ENCODE measurements at regions of chr17 and their contacts with region 1.

Region 1: GRCh38 chr17:28726226-28727130 is at the start of gene TLCD1:
- DNase-seq: peak; percentile 95
- H3K4me3 ChIP-seq: peak within 1 kb of the TSS; percentile 29 to 57 (median 41)
- H3K27ac ChIP-seq: peak within 1 kb of the TSS; percentile 10
- H3K4me1 ChIP-seq: peaks cover 38% of the 10 kb centered on the region
- H3K27me3 ChIP-seq: no peaks in the 10 kb centered on the region
- CTCF ChIP-seq: peak; percentile 98 to 99
- POLR2A ChIP-seq: no peak
- total RNA-seq, gene TLCD1: 1.8 and 2.6 TPM in 2 replicates

Region 2: GRCh38 chr17:28655160-28655840 is 71.2 kb before region 1 on chr17:
- CTCF ChIA-PET with region 1: no interaction called
- POLR2A ChIA-PET with region 1: no interaction called
- dilution Hi-C with region 1: no loop called
- intact Hi-C with region 1: no loop called
- DNase-seq: no peak
- H3K4me3 ChIP-seq: no peak overlapping the region
- H3K27ac ChIP-seq: no peak overlapping the region
- H3K4me1 ChIP-seq: no peaks in the 10 kb centered on the region
- H3K27me3 ChIP-seq: no peaks in the 10 kb centered on the region
- CTCF ChIP-seq: no peak
- POLR2A ChIP-seq: no peak

Region 3: GRCh38 chr17:28710861-28711722 is 15.4 kb before region 1 on chr17:
- CTCF ChIA-PET with region 1: interaction called, 21 read pairs
- POLR2A ChIA-PET with region 1: interaction called, 3 read pairs
- dilution Hi-C with region 1: no loop called
- intact Hi-C with region 1: no loop called
- DNase-seq: peak; percentile 93
- H3K4me3 ChIP-seq: peak overlapping the region; percentile 3 to 55 (median 39)
- H3K27ac ChIP-seq: peak overlapping the region; percentile 43
- H3K4me1 ChIP-seq: peaks cover 6% of the 10 kb centered on the region
- H3K27me3 ChIP-seq: no peaks in the 10 kb centered on the region
- CTCF ChIP-seq: no peak
- POLR2A ChIP-seq: peak; percentile 97

Region 4: GRCh38 chr17:28878981-28879380 is 152.5 kb after region 1 on chr17:
- CTCF ChIA-PET with region 1: interaction called, 19 read pairs
- POLR2A ChIA-PET with region 1: no interaction called
- dilution Hi-C with region 1: no loop called
- intact Hi-C with region 1: loop called (anchors 1 kb)
- DNase-seq: peak; percentile 33
- H3K4me3 ChIP-seq: no peak overlapping the region
- H3K27ac ChIP-seq: no peak overlapping the region
- H3K4me1 ChIP-seq: no peaks in the 10 kb centered on the region
- H3K27me3 ChIP-seq: no peaks in the 10 kb centered on the region
- CTCF ChIP-seq: peak; percentile 10 to 47
- POLR2A ChIP-seq: no peak

Region 5: DNA sequence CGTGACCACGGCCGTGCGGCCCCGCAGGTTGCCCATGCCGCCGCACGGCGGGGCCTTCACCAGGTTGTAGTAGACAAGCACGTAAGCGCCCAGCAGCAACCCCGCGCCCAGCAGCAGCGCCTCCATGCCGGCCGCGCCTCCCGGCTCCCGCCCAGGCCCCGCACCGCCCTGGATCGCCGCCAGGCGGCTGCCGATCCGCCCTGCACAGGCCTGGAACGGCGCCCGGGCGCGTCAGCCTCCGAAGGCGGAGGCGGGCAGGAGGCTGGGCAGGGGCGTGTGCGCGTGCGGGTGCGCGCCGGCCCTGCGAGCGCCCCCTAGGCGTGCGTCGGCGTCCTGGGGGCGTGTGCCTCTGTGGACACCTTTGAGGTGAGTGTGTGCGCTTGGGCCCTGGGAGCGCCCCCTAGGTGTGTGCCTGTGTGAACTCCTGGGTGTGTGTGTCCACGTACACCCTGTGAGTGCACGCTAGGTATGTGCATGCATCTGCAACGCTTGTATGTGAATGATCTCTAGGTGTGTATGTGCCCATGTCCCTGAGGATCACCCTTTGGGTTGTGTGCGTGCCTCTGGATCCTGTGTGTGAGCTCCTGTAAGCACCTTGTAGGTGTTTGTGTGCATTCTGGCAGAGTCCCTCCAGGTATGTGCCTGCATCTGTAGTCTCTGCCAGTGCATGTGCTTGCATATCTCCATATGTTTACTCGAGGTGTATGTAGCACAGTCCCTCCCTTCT is 176.5 kb after region 1 on chr17 and contains the start of gene DHRS13:
- CTCF ChIA-PET with region 1: interaction called, 19 read pairs
- POLR2A ChIA-PET with region 1: no interaction called
- dilution Hi-C with region 1: no loop called
- intact Hi-C with region 1: loop called (anchors 2 kb)
- DNase-seq: peak; percentile 93
- H3K4me3 ChIP-seq: peak within 1 kb of the TSS; percentile 45 to 67 (median 59)
- H3K27ac ChIP-seq: peak within 1 kb of the TSS; percentile 15
- H3K4me1 ChIP-seq: peaks cover 13% of the 10 kb centered on the region
- H3K27me3 ChIP-seq: no peaks in the 10 kb centered on the region
- CTCF ChIP-seq: peak; percentile 87 to 99
- POLR2A ChIP-seq: no peak
- total RNA-seq, gene DHRS13: 5.6 and 7.2 TPM in 2 replicates

Region 6: DNA sequence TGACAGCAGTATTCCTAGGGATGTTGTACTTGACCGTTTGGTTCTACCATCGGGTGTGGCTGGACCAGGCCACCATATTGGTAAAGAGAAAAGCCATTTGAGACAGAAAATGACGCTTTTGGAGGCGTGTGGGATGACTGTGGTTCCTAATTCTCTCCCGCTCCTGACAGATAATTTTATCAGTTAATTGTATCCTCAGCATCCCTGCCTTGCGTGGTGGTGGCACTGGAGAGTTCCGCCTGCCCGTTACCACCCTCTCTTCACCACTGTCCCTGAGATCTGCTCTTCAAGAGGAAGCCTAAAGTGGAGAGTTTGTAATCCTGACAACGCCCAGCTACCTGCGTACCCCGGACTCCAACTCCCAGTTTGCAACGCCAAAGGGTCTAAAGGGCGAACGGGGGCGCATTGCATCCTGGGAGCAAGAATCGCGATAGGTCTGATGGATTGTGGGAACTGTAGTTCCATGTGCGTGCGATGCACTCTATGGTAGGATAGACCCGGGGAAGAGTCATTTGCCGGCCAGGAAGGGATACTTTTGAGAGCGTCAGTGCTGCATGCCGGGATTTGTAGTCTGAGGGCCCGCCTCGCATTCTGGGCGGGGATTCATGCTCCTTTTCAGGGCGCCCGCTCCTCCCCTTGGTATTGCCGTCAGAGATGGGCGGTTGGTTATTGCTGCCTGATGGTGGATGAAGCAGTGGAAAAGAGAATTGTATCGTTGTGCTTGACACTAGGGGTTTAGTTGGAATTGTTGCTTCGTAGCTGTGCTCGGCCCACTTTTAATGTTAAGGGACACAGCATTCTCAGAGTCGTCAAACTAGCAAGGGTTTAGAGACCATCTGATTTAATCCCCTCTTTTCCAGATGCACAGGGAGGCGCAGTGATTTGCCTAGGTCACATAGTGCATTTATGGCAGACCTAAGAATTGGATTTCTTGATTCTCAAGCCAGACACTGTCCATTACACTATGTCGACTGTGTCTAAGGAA is 225.8 kb after region 1 on chr17:
- CTCF ChIA-PET with region 1: interaction called, 249 read pairs
- POLR2A ChIA-PET with region 1: interaction called, 11 read pairs
- dilution Hi-C with region 1: no loop called
- intact Hi-C with region 1: loop called (anchors 1 kb)
- DNase-seq: peak; percentile 100
- H3K4me3 ChIP-seq: peak overlapping the region in 2 of 3 experiments; percentile 65 to 72
- H3K27ac ChIP-seq: peak overlapping the region; percentile 80
- H3K4me1 ChIP-seq: peaks cover 17% of the 10 kb centered on the region
- H3K27me3 ChIP-seq: no peaks in the 10 kb centered on the region
- CTCF ChIP-seq: no peak
- POLR2A ChIP-seq: peak; percentile 17

Region 7: GRCh38 chr17:29293890-29294579 is 567.6 kb after region 1 on chr17 and contains the start of gene NUFIP2:
- CTCF ChIA-PET with region 1: no interaction called
- POLR2A ChIA-PET with region 1: interaction called, 12 read pairs
- dilution Hi-C with region 1: no loop called
- intact Hi-C with region 1: no loop called
- DNase-seq: peak; percentile 99
- H3K4me3 ChIP-seq: peak within 1 kb of the TSS; percentile 70 to 95 (median 78)
- H3K27ac ChIP-seq: peak within 1 kb of the TSS; percentile 82
- H3K4me1 ChIP-seq: peaks cover 30% of the 10 kb centered on the region
- H3K27me3 ChIP-seq: no peaks in the 10 kb centered on the region
- CTCF ChIP-seq: no peak
- POLR2A ChIP-seq: peak; percentile 100
- total RNA-seq, gene NUFIP2: 51.1 and 60.7 TPM in 2 replicates